Left lung (tissue), 14 donors: ENCODE measurements at regions of chr4 and their contacts with region 1.

Region 1: GRCh38 chr4:17447675-17448298 is 64.1 kb downstream of the QDPR start:
- DNase-seq: peak in 2 of 4 donors; percentile 61 to 77
- ATAC-seq: peak; percentile 97
- H3K4me3 ChIP-seq: no peak overlapping the region
- H3K27ac ChIP-seq: no peak overlapping the region
- H3K4me1 ChIP-seq: no peaks in the 10 kb centered on the region
- H3K27me3 ChIP-seq: no peaks in the 10 kb centered on the region
- CTCF ChIP-seq: peak; percentile 57 to 60

Region 2: DNA sequence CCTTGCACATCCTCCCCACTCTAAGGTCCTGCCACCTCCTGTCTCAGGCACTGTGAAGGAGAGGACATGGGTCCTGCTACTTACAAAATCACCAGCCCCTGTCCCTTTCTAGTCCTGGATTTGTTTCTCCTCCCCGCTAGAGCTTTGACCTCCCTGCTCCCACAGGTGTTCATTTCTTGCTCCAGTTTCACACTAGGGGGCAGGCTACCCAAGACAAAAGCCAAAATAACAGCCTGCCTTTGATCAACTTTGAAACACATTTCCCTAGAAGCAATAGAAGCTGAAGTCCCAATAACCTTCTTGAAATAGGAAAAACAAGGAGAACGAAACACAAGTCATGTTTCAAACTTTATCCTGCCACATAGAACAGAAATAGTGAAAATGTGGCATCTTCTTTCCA is 100.3 kb before region 1 on chr4:
- intact Hi-C with region 1: loop called in 1 of 2 experiments (anchors 5 kb)
- DNase-seq: no peak
- ATAC-seq: peak; percentile 61
- H3K4me3 ChIP-seq: no peak overlapping the region
- H3K27ac ChIP-seq: no peak overlapping the region
- H3K4me1 ChIP-seq: no peaks in the 10 kb centered on the region
- H3K27me3 ChIP-seq: no peaks in the 10 kb centered on the region
- CTCF ChIP-seq: peak; percentile 31 to 37

Region 3: DNA sequence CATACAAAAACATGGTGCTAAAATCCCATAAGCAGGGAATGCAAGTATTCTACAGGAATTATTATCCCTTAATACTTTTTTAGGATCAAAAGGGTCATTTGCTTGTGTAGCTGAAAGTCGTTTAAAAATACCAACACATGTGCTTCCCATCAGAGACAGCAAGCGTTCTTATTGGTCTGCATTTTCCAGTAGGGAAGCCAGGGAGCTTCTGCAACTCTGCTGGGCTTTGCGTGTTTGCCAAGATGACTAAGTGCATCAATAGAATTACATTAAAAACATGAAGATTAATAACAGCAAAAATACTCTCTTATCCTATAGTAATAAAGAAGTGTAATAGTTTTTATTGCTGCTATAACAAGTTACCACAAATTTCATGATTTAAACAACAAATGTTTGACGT is 47.1 kb before region 1 on chr4:
- intact Hi-C with region 1: no loop called
- DNase-seq: no peak
- ATAC-seq: no peak
- H3K4me3 ChIP-seq: no peak overlapping the region
- H3K27ac ChIP-seq: no peak overlapping the region
- H3K4me1 ChIP-seq: no peaks in the 10 kb centered on the region
- H3K27me3 ChIP-seq: no peaks in the 10 kb centered on the region
- CTCF ChIP-seq: no peak

Region 4: GRCh38 chr4:18278244-18278643 is 830.5 kb after region 1 on chr4:
- intact Hi-C with region 1: no loop called
- DNase-seq: no peak
- ATAC-seq: no peak
- H3K4me3 ChIP-seq: no peak overlapping the region
- H3K27ac ChIP-seq: no peak overlapping the region
- H3K4me1 ChIP-seq: no peaks in the 10 kb centered on the region
- H3K27me3 ChIP-seq: no peaks in the 10 kb centered on the region
- CTCF ChIP-seq: no peak